GM12878 (cell line): ENCODE measurements at regions of chr19 and their contacts with region 1.

Region 1: DNA sequence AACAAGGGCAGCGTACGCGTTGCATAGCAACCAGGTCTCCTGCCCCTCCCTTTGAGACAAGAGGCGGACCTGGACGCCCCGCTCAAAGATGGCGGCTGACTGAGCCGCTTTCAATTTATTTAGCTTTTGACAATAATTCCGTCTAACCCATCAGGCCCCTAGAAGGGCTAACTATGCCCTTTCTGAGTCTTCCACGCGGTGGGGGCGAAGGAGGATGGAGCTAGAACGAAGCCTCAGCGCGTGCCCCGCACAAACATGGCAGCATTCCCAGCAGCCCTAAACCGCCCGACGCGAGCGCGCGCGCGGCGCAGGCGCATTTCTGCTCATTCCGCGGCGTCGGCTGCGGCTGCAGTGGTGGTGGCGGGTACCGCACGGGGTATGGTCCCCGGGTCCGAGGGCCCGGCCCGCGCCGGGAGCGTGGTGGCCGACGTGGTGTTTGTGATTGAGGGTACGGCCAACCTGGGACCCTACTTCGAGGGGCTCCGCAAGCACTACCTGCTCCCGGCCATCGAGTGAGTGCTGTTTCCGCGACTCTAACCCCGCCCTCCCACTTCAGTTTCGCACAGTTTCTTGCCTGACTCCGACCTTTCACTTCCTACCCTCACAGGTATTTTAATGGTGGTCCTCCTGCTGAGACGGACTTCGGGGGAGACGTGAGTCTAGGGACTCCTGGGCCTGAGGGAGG is at the start of gene MED25:
- DNase-seq: peak; percentile 72
- ATAC-seq: peak; percentile 89
- H3K4me3 ChIP-seq: peak within 1 kb of the TSS; percentile 96
- H3K27ac ChIP-seq: peak within 1 kb of the TSS; percentile 97
- H3K4me1 ChIP-seq: peaks cover 5% of the 10 kb centered on the region
- H3K27me3 ChIP-seq: no peaks in the 10 kb centered on the region
- CTCF ChIP-seq: peak in 1 of 3 experiments; percentile 20; a peak in 1 of 6 replicates
- EP300 ChIP-seq: no peak
- POLR2A ChIP-seq: peak; percentile 89
- RAD21 ChIP-seq: no peak
- polyA plus RNA-seq, gene MED25: 3.5 to 5.2 TPM

Region 2: GRCh38 chr19:49850473-49851342 is 32.6 kb after region 1 on chr19 and contains the start of gene PTOV1:
- CTCF ChIA-PET with region 1: interaction called, 6 read pairs
- POLR2A ChIA-PET with region 1: interaction called, 11 read pairs
- RAD21 ChIA-PET with region 1: interaction called, 4 read pairs
- SMC1A ChIA-PET with region 1: interaction called, 4 read pairs
- in situ Hi-C with region 1: no loop called
- intact Hi-C with region 1: loop called (anchors 2 kb)
- DNase-seq: peak; percentile 59
- ATAC-seq: peak; percentile 91
- H3K4me3 ChIP-seq: peak within 1 kb of the TSS; percentile 71
- H3K27ac ChIP-seq: peak within 1 kb of the TSS; percentile 64
- H3K4me1 ChIP-seq: peaks cover 26% of the 10 kb centered on the region
- H3K27me3 ChIP-seq: no peaks in the 10 kb centered on the region
- CTCF ChIP-seq: no peak
- EP300 ChIP-seq: no peak
- POLR2A ChIP-seq: peak; percentile 87
- RAD21 ChIP-seq: no peak
- polyA plus RNA-seq, gene PTOV1: 3.2 to 10.6 TPM

Region 3: GRCh38 chr19:49884130-49884529 is 66.0 kb after region 1 on chr19:
- CTCF ChIA-PET with region 1: no interaction called
- POLR2A ChIA-PET with region 1: no interaction called
- RAD21 ChIA-PET with region 1: no interaction called
- SMC1A ChIA-PET with region 1: no interaction called
- in situ Hi-C with region 1: no loop called
- intact Hi-C with region 1: no loop called
- DNase-seq: no peak
- ATAC-seq: no peak
- H3K4me3 ChIP-seq: no peak overlapping the region
- H3K27ac ChIP-seq: no peak overlapping the region
- H3K4me1 ChIP-seq: peaks cover 6% of the 10 kb centered on the region
- H3K27me3 ChIP-seq: no peaks in the 10 kb centered on the region
- CTCF ChIP-seq: no peak
- EP300 ChIP-seq: no peak
- POLR2A ChIP-seq: no peak
- RAD21 ChIP-seq: no peak

Region 4: DNA sequence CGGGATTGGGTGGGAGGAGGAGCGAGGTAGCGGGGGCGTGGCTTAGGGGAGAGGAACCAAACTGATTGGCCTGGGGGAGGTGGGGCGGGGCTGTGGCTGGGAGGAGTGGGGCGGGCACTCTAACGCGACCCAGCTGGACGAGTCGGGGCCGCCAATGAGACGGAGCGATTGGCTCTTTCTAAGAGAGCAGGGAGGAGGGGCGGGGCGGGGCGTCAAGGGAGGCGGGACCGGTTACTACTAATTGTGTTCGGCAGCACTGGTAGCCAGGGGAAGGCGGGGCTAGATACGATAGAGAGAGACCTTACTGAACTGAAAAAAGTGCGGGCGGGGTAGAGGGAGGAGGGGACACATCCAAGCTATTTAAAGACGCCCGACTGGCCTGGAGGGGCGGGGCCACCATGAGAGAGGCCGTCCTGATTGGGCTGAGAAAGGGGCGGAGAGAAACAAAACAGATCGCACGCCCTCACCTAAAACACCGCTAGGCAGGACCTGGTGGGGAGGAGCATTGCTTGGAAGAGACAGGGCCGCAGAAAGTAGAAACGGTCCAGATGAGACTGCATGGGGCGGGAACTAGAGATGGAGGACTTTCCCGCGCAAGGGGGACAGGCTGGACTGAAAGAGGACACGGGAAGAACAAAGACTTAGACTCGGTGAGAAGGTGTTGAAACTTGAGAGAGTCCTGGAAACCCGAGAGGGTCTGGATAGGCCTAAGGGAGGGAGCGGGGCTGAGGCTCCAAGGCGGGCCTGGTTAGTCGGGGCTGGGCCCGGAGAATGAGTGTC is 511.2 kb after region 1 on chr19 and contains the start of gene KCNC3:
- CTCF ChIA-PET with region 1: no interaction called
- POLR2A ChIA-PET with region 1: no interaction called
- RAD21 ChIA-PET with region 1: no interaction called
- SMC1A ChIA-PET with region 1: no interaction called
- in situ Hi-C with region 1: no loop called
- intact Hi-C with region 1: no loop called
- DNase-seq: peak; percentile 83
- ATAC-seq: peak; percentile 78
- H3K4me3 ChIP-seq: peak within 1 kb of the TSS; percentile 66
- H3K27ac ChIP-seq: peak within 1 kb of the TSS; percentile 58
- H3K4me1 ChIP-seq: peaks cover 36% of the 10 kb centered on the region
- H3K27me3 ChIP-seq: peaks cover 2 to 16% of the 10 kb centered on the region in 2 experiments; a peak in 3 of 4 replicates
- CTCF ChIP-seq: no peak
- EP300 ChIP-seq: no peak
- POLR2A ChIP-seq: peak; percentile 92
- RAD21 ChIP-seq: no peak
- polyA plus RNA-seq, gene KCNC3: not detected